CD8-positive, alpha-beta T cell (primary cell): ENCODE measurements at regions of chr16 and their contacts with region 1.

Region 1: GRCh38 chr16:3611146-3611975 is at the start of gene SLX4:
- DNase-seq: peak; percentile 79 to 98 (median 91)
- ATAC-seq: peak; percentile 87
- H3K4me3 ChIP-seq: peak within 1 kb of the TSS; percentile 80 to 96
- H3K4me3 Mint-ChIP-seq: peak within 1 kb of the TSS; percentile 99
- H3K27ac ChIP-seq: peak within 1 kb of the TSS; percentile 78 to 89
- H3K27ac Mint-ChIP-seq: peak within 1 kb of the TSS; percentile 99
- H3K4me1 ChIP-seq: peaks cover 26% of the 10 kb centered on the region
- H3K4me1 Mint-ChIP-seq: peaks cover 49% of the 10 kb centered on the region
- H3K27me3 ChIP-seq: no peaks in the 10 kb centered on the region
- H3K27me3 Mint-ChIP-seq: no peaks in the 10 kb centered on the region
- CTCF ChIP-seq: no peak
- total RNA-seq, gene SLX4: 5.1 to 5.2 TPM

Region 2: DNA sequence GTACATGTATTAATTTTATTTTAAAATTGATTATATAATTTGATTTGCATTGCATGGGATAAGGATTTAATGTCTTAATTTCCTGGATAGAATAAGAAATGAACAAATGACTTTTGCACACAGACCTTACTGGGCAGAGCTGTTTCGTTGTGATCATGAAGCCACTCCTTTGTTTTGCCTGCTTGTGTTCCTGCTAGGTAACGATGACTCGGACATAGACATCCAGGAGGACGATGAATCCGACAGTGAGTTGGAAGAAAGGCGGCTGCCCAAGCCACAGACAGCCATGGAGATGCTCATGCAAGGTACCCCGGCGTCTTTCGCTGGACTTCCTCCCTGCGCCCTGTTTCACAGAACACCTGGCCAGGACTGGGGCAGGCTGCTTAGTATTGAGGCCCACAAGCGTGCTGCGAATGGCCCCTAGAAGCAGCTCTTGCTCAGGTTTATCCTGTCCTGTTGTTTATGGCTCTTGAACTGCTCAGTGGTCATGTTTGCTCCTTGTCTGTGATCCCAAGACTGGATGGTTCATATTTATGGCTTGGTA is 80.9 kb before region 1 on chr16:
- CTCF ChIA-PET with region 1: interaction called, 4 read pairs
- POLR2A ChIA-PET with region 1: no interaction called
- intact Hi-C with region 1: loop called in 1 of 2 experiments (anchors 5 kb)
- DNase-seq: no peak
- ATAC-seq: no peak
- H3K4me3 ChIP-seq: no peak overlapping the region
- H3K4me3 Mint-ChIP-seq: no peak overlapping the region
- H3K27ac ChIP-seq: no peak overlapping the region
- H3K27ac Mint-ChIP-seq: no peak overlapping the region
- H3K4me1 ChIP-seq: no peaks in the 10 kb centered on the region
- H3K4me1 Mint-ChIP-seq: peaks cover 13% of the 10 kb centered on the region
- H3K27me3 ChIP-seq: no peaks in the 10 kb centered on the region
- H3K27me3 Mint-ChIP-seq: no peaks in the 10 kb centered on the region
- CTCF ChIP-seq: no peak

Region 3: DNA sequence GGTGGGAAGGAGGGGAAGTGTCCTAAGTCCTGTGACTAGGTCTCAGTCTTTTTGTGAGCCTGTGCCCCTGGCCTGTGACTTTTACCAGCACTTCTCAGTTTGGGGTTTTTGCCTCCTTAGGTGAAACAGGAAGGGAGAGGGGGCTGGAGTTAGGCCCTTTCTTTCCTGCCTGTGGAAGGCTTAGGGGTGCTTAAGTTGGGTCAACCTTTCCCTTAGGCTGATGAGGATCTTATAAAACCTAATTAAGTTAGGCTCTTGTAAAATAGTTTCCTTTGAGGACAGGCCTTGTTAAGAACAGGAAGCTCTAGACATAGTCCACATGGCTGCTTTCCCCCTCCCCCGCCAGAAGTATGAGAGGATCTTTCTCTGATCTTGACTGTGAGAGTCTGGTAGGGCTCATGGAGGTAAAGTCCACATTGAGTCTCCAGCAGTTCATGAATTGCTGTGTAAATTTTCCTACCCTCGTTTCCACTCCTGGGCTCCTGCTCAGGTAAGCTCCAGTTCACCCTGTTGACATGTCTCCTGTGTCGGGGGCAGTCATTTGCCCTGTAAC is 26.1 kb after region 1 on chr16:
- CTCF ChIA-PET with region 1: no interaction called
- POLR2A ChIA-PET with region 1: no interaction called
- intact Hi-C with region 1: loop called in 1 of 2 experiments (anchors 1 kb)
- DNase-seq: peak in 5 of 9 experiments; percentile 16 to 55 (median 39)
- ATAC-seq: peak; percentile 87
- H3K4me3 ChIP-seq: no peak overlapping the region
- H3K4me3 Mint-ChIP-seq: peak overlapping the region; percentile 38
- H3K27ac ChIP-seq: peak overlapping the region in 1 of 2 experiments; percentile 46
- H3K27ac Mint-ChIP-seq: peak overlapping the region; percentile 87
- H3K4me1 ChIP-seq: peaks cover 18% of the 10 kb centered on the region
- H3K4me1 Mint-ChIP-seq: peaks cover 34% of the 10 kb centered on the region
- H3K27me3 ChIP-seq: no peaks in the 10 kb centered on the region
- H3K27me3 Mint-ChIP-seq: no peaks in the 10 kb centered on the region
- CTCF ChIP-seq: no peak

Region 4: DNA sequence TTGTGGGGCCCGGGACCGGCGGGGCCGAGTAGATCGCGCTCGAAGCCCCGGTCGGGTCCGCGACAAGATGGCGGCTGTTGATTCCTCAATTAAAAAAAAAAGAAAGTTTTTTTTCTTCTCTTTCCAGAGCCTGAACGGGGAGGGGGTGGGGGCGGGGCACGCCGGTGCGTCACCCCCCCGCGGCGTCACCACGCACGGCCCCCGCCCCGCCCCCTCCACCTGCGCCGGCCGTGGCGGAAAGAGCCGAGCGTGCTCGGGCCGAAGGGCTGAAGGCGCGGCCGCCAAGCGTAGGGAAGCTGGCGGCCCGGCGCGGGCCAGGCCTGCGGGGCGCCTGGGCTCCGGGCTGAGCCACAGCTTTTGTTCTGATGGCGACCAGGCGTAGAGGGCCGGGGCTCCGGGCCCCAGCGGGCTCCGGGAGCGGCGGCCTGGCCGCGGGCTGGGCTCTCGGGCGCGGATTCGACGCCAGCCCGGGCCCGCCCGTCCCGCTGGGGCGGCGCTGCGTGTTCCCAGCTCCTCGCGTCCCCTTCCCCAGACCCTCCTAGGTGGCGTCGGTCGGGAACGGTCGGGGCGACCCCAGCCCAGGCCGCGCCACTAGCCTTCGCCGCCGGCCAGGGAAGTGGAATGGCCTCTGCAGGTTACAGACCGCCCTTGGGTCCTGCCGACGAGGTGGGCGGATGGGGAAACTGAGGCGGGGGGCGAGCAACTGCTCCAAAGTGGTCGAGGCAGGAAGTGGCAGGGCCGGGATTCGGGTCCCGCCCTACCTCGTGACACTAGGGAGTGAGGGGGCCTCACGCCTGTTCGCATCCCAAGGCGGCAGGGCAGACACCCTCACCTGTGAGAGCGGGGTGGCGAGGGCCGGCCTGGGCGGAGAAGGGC is 269.5 kb after region 1 on chr16 and contains the start of gene CREBBP:
- CTCF ChIA-PET with region 1: no interaction called
- POLR2A ChIA-PET with region 1: no interaction called
- intact Hi-C with region 1: loop called (anchors 2 to 5 kb)
- DNase-seq: peak; percentile 80 to 95 (median 87)
- ATAC-seq: peak; percentile 84
- H3K4me3 ChIP-seq: peak within 1 kb of the TSS; percentile 70 to 80
- H3K4me3 Mint-ChIP-seq: peak within 1 kb of the TSS; percentile 88
- H3K27ac ChIP-seq: peak within 1 kb of the TSS in 1 of 2 experiments; percentile 71
- H3K27ac Mint-ChIP-seq: peak within 1 kb of the TSS; percentile 94
- H3K4me1 ChIP-seq: peaks cover 32% of the 10 kb centered on the region
- H3K4me1 Mint-ChIP-seq: peaks cover 38% of the 10 kb centered on the region
- H3K27me3 ChIP-seq: no peaks in the 10 kb centered on the region
- H3K27me3 Mint-ChIP-seq: peaks cover 2% of the 10 kb centered on the region
- CTCF ChIP-seq: no peak
- total RNA-seq, gene CREBBP: 186 to 189 TPM

Region 5: GRCh38 chr16:4116337-4117249 is 505.2 kb after region 1 on chr16 and contains the start of gene ADCY9:
- CTCF ChIA-PET with region 1: no interaction called
- POLR2A ChIA-PET with region 1: no interaction called
- intact Hi-C with region 1: loop called in 1 of 2 experiments (anchors 5 kb)
- DNase-seq: peak; percentile 31 to 92 (median 74)
- ATAC-seq: peak; percentile 77
- H3K4me3 ChIP-seq: peak within 1 kb of the TSS; percentile 55 to 64
- H3K4me3 Mint-ChIP-seq: peak within 1 kb of the TSS; percentile 87
- H3K27ac ChIP-seq: peak within 1 kb of the TSS in 1 of 2 experiments; percentile 39
- H3K27ac Mint-ChIP-seq: peak within 1 kb of the TSS; percentile 52
- H3K4me1 ChIP-seq: peaks cover 33% of the 10 kb centered on the region
- H3K4me1 Mint-ChIP-seq: peaks cover 40% of the 10 kb centered on the region
- H3K27me3 ChIP-seq: no peaks in the 10 kb centered on the region
- H3K27me3 Mint-ChIP-seq: peaks cover 3% of the 10 kb centered on the region
- CTCF ChIP-seq: no peak
- total RNA-seq, gene ADCY9: 4.2 to 4.3 TPM